SK-N-SH (cell line): ENCODE measurements at regions of chr12 and their contacts with region 1.

Region 1: DNA sequence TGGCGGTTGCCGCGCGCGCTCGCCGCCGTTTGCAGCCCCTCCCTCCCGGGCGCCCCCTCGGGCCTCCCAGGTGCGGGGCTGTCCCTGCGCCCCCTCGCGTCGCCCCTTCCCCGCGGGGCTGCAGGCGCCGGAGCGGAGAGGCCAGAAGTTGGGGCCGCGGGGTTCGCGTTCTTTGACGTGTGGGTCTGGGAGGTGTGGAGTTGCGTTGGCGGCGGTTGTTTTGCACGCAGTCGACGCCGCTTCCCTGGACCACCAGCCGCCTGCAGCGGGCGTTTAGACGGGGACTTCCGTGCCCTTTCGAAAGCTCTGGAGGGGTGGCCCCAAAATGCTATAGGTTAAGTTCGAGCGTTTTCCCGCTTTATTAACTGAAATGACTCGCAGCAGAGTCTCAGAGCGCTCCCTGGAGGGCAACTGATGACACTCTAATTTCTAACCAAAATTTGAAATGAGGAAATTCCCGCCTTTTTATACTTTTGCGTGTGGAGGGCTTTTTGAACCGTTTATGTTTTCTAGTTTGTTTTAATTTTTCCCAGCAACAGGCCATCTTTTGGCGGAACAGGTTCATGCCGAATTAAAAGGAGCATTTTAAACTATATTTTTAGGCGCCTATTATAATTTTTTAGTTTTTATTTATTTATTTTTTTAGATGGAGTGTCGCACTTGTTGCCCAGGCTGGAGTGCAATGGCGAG is 939 bp downstream of the TMPO start:
- DNase-seq: peak; percentile 80
- H3K4me3 ChIP-seq: peak overlapping the region; percentile 77 to 92
- H3K27ac ChIP-seq: peak overlapping the region; percentile 84 to 89
- H3K4me1 ChIP-seq: no peaks in the 10 kb centered on the region; a peak in 2 of 4 replicates
- H3K27me3 ChIP-seq: no peaks in the 10 kb centered on the region
- CTCF ChIP-seq: peak; percentile 83
- EP300 ChIP-seq: no peak
- RAD21 ChIP-seq: peak; percentile 76

Region 2: DNA sequence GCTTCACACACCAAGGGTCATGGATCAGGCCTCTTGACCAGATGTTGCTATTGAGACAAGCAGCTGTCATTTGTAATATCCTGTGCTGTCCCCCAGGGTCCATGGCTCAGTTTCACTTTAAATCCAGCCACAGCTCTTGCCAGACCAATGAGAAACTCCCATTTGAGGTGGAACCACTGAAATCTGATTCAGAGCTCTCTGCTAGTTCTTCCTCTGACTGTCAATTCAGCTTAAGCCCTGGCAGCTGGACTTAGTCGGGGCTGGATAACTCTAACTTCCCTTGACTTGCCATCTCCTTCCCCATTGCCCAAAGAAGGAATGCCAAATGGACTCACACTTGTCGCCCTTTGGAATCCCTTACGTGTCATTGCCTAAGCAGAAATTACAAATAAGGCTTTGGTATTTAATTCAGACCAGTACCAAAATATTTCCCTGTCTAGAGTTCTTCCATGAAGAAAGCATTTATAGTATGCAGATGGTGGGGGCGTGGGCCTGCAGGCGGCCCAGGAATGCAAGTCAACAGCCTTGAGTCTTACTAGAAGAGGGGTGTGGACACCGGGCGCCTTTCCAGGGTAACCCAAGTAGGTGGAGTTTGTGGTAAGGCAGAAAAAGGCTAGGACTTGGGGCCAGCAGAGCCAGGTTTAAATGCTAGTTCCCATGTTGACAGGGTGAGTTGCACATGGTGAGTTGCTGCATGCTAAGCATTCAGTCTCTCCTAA is 97.8 kb before region 1 on chr12:
- CTCF ChIA-PET with region 1: interaction called, 34 read pairs
- POLR2A ChIA-PET with region 1: no interaction called
- DNase-seq: peak; percentile 27
- H3K4me3 ChIP-seq: peak overlapping the region; percentile 17 to 21; a peak in 2 of 4 replicates
- H3K27ac ChIP-seq: peak overlapping the region; percentile 41 to 62; a peak in 3 of 4 replicates
- H3K4me1 ChIP-seq: peaks cover 17 to 20% of the 10 kb centered on the region in 2 experiments; a peak in 3 of 4 replicates
- H3K27me3 ChIP-seq: no peaks in the 10 kb centered on the region
- CTCF ChIP-seq: no peak
- EP300 ChIP-seq: no peak
- RAD21 ChIP-seq: no peak

Region 3: GRCh38 chr12:98424726-98425401 is 91.5 kb before region 1 on chr12:
- CTCF ChIA-PET with region 1: interaction called, 34 read pairs
- POLR2A ChIA-PET with region 1: no interaction called
- DNase-seq: peak; percentile 70
- H3K4me3 ChIP-seq: no peak overlapping the region
- H3K27ac ChIP-seq: peak overlapping the region in 1 of 2 experiments; percentile 1; a peak in 1 of 4 replicates
- H3K4me1 ChIP-seq: peaks cover 0 to 19% of the 10 kb centered on the region in 2 experiments; a peak in 2 of 4 replicates
- H3K27me3 ChIP-seq: no peaks in the 10 kb centered on the region
- CTCF ChIP-seq: peak; percentile 80
- EP300 ChIP-seq: no peak
- RAD21 ChIP-seq: peak; percentile 63

Region 4: DNA sequence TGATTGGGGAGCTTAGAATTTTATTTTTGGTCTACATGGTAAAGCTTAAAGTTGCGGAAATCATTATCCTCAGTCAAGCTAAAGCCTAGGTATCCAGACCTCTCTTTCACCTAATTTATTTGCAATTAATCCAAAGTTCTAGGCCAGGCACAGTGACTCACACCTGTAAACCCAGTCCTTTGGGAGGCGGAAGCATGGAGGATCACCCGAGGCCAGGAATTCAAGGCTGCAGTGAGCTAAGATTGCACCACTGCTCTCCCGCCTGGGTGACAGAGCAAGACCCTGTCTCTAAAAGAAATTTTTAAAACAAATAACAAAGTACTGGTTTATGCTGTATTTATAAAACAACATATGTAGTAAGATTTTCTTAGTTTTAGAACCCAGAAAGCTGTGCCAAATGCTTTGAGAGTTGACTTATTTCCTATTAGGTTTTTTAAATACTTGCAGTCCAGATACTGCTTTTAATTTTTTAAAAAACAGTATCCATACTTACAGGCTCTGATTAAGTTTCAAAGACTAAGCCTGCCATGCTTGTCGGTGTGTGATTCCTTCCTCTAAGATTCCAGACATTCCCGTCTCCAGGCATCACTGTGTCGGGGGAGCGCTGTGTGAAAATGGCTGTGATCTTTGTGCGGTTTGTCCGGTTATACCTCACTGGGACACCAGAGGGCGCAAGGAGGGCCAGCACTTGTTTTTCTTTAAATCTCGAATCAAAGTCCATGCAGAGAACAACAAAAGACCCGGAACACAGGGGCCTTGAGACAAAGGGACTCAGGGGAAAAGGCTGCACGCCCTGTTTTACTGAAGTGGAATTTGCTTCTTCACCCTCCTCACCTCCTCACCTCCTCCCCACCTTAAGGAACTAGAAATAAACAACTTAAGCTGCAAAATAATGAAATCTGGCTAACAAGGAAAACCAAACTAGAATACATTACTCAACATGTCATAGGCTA is 25.6 kb before region 1 on chr12:
- CTCF ChIA-PET with region 1: interaction called, 37 read pairs
- POLR2A ChIA-PET with region 1: no interaction called
- DNase-seq: peak; percentile 76
- H3K4me3 ChIP-seq: peak overlapping the region in 1 of 2 experiments; percentile 18; a peak in 1 of 4 replicates
- H3K27ac ChIP-seq: peak overlapping the region; percentile 69 to 80
- H3K4me1 ChIP-seq: peaks cover 5% of the 10 kb centered on the region in 2 experiments; a peak in 2 of 4 replicates
- H3K27me3 ChIP-seq: no peaks in the 10 kb centered on the region
- CTCF ChIP-seq: peak; percentile 90
- EP300 ChIP-seq: peak in 1 of 2 experiments; percentile 17; a peak in 1 of 4 replicates
- RAD21 ChIP-seq: peak; percentile 75

Region 5: GRCh38 chr12:98532681-98533304 is 16.5 kb after region 1 on chr12:
- CTCF ChIA-PET with region 1: interaction called, 11 read pairs
- POLR2A ChIA-PET with region 1: no interaction called
- DNase-seq: peak; percentile 29
- H3K4me3 ChIP-seq: no peak overlapping the region
- H3K27ac ChIP-seq: no peak overlapping the region
- H3K4me1 ChIP-seq: peaks cover 0 to 3% of the 10 kb centered on the region in 2 experiments; a peak in 1 of 4 replicates
- H3K27me3 ChIP-seq: no peaks in the 10 kb centered on the region
- CTCF ChIP-seq: peak; percentile 70
- EP300 ChIP-seq: no peak
- RAD21 ChIP-seq: peak; percentile 16; the same call in 1 of the 2 replicates

Region 6: GRCh38 chr12:98671459-98671858 is 155.1 kb after region 1 on chr12:
- CTCF ChIA-PET with region 1: no interaction called
- POLR2A ChIA-PET with region 1: no interaction called
- DNase-seq: no peak
- H3K4me3 ChIP-seq: no peak overlapping the region
- H3K27ac ChIP-seq: no peak overlapping the region
- H3K4me1 ChIP-seq: no peaks in the 10 kb centered on the region; a peak in 1 of 4 replicates
- H3K27me3 ChIP-seq: no peaks in the 10 kb centered on the region
- CTCF ChIP-seq: no peak
- EP300 ChIP-seq: no peak
- RAD21 ChIP-seq: no peak